ENCODE measurements at regions of chr12 and their contacts with region 1.

Region 1: GRCh38 chr12:94101738-94102660 is 46.4 kb upstream of the PLXNC1 start:
- DNase-seq: peak; percentile 65 to 75
- ATAC-seq: peak; percentile 69 to 90
- H3K4me3 ChIP-seq: peak overlapping the region; percentile 58 to 78 (median 70)
- H3K27ac ChIP-seq: peak overlapping the region in 1 of 4 donors; percentile 32
- H3K4me1 ChIP-seq: peaks cover 15 to 20% of the 10 kb centered on the region in 2 donors
- H3K27me3 ChIP-seq: peaks cover 0 to 4% (median 0%) of the 10 kb centered on the region in 3 donors
- CTCF ChIP-seq: peak; percentile 72 to 86 (median 83)
- POLR2A ChIP-seq: no peak

Region 2: DNA sequence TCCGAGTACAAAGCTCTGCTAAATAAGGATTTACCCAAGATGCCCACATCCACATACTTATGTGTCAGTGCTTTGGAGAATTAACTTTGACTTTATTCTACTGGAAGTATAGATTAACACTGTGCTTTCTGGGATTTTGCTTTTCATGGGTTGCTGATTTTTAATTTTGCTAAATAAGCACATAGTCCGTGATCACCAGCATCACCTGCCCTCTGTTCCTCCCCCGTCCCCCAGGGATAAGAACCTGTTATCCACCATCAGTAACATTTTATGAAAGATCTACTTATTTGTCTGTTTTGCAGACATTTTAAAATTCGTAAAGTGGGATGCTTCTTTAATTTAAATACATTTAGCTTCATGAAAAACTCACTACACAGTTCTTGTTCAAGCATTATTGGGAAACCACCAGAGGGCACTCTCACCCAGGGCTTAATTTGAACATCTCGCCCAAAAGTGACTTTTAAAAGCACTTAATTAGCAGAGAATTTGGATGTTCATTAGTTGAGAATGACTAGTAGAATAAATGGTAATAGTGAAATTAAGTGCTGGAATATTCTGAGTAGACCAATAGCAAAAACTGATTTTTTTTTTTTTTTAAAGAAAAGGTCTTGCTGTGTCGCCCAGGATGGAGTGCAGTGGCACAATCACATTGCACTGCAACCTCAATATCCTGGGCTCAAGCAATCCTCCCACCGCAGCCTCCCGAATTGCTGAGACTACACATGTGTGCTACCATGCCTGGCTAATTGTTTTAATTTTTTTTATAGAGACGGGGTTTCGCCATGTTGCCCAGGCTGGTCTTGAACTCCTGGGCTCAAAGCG is 599.0 kb before region 1 on chr12:
- in situ Hi-C with region 1: loop called (anchors 5 kb)
- intact Hi-C with region 1: loop called (anchors 2 kb)
- DNase-seq: no peak
- ATAC-seq: no peak
- H3K4me3 ChIP-seq: no peak overlapping the region
- H3K27ac ChIP-seq: no peak overlapping the region
- H3K4me1 ChIP-seq: no peaks in the 10 kb centered on the region
- H3K27me3 ChIP-seq: no peaks in the 10 kb centered on the region
- CTCF ChIP-seq: peak; percentile 49 to 79 (median 71)
- POLR2A ChIP-seq: no peak

Region 3: DNA sequence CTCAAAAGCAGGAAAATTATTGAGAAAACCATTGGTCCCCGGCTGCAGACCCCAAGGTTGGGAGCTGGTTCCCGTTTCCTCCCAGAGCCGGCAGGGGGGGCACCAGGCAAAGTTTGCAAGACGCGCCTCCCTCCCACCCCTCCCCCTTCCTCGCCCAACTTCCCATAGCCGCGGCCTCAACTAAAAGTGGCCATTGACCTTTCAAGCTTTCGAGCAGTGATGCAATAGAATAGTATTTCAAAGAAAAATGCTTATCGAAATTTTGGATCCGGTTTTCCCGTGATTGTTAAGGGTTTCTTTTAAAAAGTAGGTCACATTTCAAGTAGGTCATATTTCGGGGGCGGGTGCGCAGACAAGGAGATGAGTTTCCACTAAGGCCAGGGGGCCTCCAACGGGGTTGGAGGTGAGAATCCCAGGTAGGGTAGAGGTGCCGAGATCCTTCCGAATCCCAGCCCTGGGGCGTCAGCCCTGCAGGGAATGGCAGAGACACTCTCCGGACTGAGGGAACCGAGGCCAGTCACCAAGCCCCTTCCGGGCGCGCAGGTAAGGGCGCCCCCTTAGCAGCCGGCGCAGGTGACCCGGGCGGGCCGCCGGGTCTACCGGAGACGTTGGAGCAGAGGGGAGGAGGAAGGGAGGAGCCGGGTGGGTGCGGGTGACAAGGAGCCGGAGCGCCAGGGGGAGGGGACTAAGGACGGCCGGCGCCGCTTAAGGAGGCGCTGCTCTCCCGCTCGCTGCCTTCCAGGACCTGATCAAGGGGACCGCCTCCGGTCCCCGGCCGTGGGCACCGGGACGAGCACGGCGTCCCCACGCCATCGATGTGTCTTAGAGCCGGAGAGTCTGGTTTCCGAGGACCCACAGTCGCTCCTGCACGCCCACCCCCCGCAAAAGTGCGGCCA is 532.1 kb before region 1 on chr12:
- in situ Hi-C with region 1: loop called in 3 of 4 experiments (anchors 5 kb)
- intact Hi-C with region 1: loop called (anchors 1 kb)
- DNase-seq: peak; percentile 71 to 73
- ATAC-seq: peak; percentile 77 to 81
- H3K4me3 ChIP-seq: peak overlapping the region; percentile 77 to 96 (median 85)
- H3K27ac ChIP-seq: peak overlapping the region; percentile 76 to 89 (median 83)
- H3K4me1 ChIP-seq: peaks cover 5 to 28% of the 10 kb centered on the region in 2 donors
- H3K27me3 ChIP-seq: peaks cover 11 to 28% (median 18%) of the 10 kb centered on the region in 3 donors
- CTCF ChIP-seq: peak; percentile 74 to 92 (median 82)
- POLR2A ChIP-seq: no peak

Region 4: DNA sequence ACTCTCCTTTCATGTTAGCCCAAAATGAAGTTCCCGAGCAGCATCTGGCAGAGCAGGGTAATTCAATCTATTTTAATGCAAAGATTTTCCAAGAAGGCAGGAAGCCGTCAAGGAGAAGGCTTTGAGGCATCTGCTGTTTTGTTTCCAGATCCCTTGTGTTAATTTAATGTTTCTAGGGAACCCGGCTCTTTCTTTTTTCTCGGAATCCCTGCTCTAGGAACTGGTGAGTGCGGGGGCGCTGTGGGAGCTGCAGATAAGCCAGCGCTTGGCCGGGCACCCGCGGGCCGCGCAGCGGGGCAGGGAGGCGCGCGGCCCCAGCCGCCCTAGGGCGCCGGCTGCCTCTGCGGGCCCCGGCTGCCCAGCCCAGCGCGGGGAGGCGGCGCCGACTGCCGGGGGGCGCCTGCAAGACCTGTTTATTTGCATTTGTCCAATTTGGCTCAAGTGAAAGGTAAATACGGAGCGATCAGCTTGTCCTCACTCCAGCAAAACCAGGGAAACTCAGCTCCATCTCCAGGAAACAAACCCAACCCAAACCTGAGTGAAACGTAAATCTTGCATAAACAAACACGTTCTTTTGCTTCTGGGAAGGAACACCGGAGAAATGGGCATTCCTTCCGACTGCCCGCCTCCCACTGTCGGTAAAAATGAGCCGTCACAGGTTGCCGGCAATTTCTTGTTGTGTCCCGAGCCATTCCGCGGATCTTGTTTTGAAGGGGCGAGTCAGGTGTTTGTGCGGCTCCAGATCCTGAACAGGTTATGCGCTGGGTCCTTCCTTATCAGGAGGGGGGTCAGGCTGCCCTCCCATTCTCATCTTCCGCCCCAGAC is 359.7 kb before region 1 on chr12:
- in situ Hi-C with region 1: loop called in 1 of 4 experiments (anchors 10 kb)
- intact Hi-C with region 1: loop called (anchors 5 kb)
- DNase-seq: peak in 1 of 2 donors; percentile 52
- ATAC-seq: peak; percentile 75 to 84
- H3K4me3 ChIP-seq: peak overlapping the region; percentile 57 to 69 (median 61)
- H3K27ac ChIP-seq: peak overlapping the region; percentile 75 to 84 (median 76)
- H3K4me1 ChIP-seq: peaks cover 39 to 66% of the 10 kb centered on the region in 2 donors
- H3K27me3 ChIP-seq: no peaks in the 10 kb centered on the region
- CTCF ChIP-seq: peak; percentile 29 to 58 (median 49)
- POLR2A ChIP-seq: no peak

Region 5: GRCh38 chr12:93766796-93767523 is 335.0 kb before region 1 on chr12:
- in situ Hi-C with region 1: loop called in 2 of 4 experiments (anchors 25 kb)
- intact Hi-C with region 1: loop called (anchors 2 kb)
- DNase-seq: peak; percentile 23 to 45
- ATAC-seq: peak; percentile 79 to 85
- H3K4me3 ChIP-seq: peak overlapping the region in 2 of 4 donors; percentile 4
- H3K27ac ChIP-seq: peak overlapping the region; percentile 51 to 73 (median 66)
- H3K4me1 ChIP-seq: peaks cover 33 to 38% of the 10 kb centered on the region in 2 donors
- H3K27me3 ChIP-seq: no peaks in the 10 kb centered on the region
- CTCF ChIP-seq: peak; percentile 51 to 77 (median 61)
- POLR2A ChIP-seq: no peak

Region 6: DNA sequence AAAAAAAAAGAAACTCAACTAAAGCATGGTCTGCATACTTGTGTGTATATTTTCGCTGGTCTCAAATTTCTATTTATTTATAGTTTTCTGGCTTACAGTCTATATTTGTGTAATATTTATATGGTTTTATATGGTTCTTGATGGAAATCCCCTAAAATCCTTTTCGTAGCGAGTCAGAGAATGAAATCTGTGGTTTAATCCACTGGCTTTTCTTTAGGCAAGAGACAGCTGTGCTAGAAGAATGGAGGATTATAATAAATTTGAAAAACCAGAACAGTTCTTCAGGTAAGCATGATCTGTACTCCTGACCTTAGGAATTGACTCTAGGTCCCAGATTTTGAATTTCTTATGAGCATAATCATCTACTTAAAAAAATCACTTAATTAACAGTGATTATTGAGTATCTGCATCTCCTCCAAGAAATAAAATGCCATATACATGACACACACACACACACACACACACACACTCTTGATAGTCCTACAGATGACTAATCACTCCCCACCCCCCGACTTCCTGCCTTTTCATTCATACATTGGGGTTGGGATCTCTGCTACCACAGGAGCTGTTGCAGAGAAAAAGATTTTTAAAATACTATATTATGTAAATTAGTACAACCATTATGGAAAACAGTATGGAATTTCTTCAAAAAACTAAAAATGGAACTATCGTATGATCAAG is 311.4 kb before region 1 on chr12:
- in situ Hi-C with region 1: no loop called
- intact Hi-C with region 1: no loop called
- DNase-seq: no peak
- ATAC-seq: no peak
- H3K4me3 ChIP-seq: no peak overlapping the region
- H3K27ac ChIP-seq: no peak overlapping the region
- H3K4me1 ChIP-seq: peaks cover 17 to 29% of the 10 kb centered on the region in 2 donors
- H3K27me3 ChIP-seq: no peaks in the 10 kb centered on the region
- CTCF ChIP-seq: no peak
- POLR2A ChIP-seq: no peak

Region 7: DNA sequence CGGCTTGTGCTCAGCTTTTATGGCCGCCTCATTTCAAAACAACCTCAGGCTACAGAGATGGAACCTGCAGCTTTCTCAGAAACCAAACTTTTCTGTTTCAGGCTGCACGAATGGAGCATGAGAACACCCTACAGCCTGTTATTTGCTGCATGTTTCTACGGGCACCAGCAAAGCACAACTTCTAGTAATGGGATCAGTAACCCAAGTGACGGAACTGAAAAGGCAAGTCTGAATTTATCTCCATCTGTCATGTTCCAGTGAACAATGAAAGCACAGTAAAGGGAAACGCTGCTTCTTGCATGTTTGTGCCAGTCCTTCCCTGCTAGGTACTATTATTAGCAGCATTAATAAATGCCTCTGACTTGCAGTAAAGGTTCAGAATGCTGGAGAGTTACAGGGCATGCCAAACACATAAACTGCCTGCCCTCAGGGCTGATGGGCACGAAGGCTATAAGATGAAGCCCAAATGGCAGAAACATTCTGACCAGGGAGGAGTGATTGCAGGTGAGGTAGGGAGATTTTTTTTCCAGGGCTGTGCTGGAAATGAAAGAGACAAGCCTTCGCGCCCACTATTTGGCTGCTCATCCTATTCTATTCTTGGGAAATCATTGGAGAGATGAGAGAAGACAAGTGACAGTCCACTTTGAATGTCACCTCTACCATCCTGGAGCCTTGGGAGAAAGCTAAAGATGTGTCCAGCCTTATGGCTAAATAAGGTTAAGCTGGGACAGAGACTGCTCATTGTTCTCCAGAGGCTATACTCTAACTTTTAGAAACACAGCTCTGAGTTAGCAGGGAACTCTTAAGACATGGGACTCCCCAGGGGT is 54.0 kb before region 1 on chr12:
- in situ Hi-C with region 1: no loop called
- intact Hi-C with region 1: loop called (anchors 5 kb)
- DNase-seq: peak in 1 of 2 donors; percentile 34
- ATAC-seq: peak; percentile 92
- H3K4me3 ChIP-seq: peak overlapping the region in 3 of 4 donors; percentile 10 to 42 (median 26)
- H3K27ac ChIP-seq: peak overlapping the region; percentile 57 to 79 (median 69)
- H3K4me1 ChIP-seq: peaks cover 9 to 15% of the 10 kb centered on the region in 2 donors
- H3K27me3 ChIP-seq: no peaks in the 10 kb centered on the region
- CTCF ChIP-seq: no peak
- POLR2A ChIP-seq: no peak

Measured in gastrocnemius medialis (tissue), 4 donors.